Mammary epithelial cell (primary cell): ENCODE measurements at regions of chr1 and their contacts with region 1.

Region 1: DNA sequence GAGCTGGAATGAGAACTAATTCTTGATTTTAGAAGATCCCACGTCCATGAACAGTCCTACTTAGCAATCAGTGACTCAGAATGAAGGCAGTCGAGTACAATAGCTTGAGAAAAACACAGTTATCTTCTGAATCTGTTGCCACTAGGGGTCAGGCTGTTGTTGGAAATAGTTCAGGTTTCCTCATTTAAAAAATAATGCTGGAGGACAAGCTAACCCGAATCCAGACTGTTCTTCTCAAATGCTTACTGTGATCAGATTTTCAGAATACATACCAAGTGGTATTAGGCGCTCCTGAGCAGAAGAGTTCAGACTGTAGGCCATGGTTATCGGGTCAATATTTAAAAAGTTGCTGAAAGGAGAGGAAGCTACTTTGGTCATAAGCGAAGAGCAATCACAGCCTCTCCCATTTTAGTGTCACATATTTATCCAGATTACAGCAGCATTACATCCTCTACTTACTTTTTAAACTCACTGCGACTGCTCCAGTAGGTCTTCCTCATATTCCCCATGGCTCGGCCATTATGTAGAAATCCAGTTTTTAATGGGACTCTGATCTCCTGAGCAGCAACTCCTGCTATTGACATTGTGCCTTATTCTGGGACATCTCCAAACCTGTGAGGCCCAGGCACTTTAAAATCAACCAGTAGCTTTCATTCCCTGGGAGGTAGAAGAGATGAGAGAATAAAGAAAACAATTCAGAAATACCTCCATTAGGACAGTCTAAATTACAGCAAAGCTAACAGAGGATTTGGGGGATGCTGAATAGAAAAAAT is 10.9 kb downstream of the ERRFI1 start:
- DNase-seq: peak; percentile 78
- H3K4me3 ChIP-seq: no peak overlapping the region
- H3K27ac ChIP-seq: peak overlapping the region; percentile 30
- H3K4me1 ChIP-seq: peaks cover 58% of the 10 kb centered on the region
- H3K27me3 ChIP-seq: no peaks in the 10 kb centered on the region
- CTCF ChIP-seq: peak; percentile 60 to 67

Region 2: GRCh38 chr1:7975212-7975865 is 39.9 kb before region 1 on chr1:
- CTCF ChIA-PET with region 1: no interaction called
- dilution Hi-C with region 1: no loop called
- in situ Hi-C with region 1: loop called in 1 of 2 experiments (anchors 5 kb)
- intact Hi-C with region 1: no loop called
- DNase-seq: peak; percentile 75
- H3K4me3 ChIP-seq: no peak overlapping the region
- H3K27ac ChIP-seq: no peak overlapping the region
- H3K4me1 ChIP-seq: no peaks in the 10 kb centered on the region
- H3K27me3 ChIP-seq: no peaks in the 10 kb centered on the region
- CTCF ChIP-seq: peak; percentile 96 to 98

Region 3: GRCh38 chr1:7983086-7983778 is 32.0 kb before region 1 on chr1:
- CTCF ChIA-PET with region 1: no interaction called
- dilution Hi-C with region 1: no loop called
- in situ Hi-C with region 1: loop called in 1 of 2 experiments (anchors 5 kb)
- intact Hi-C with region 1: loop called (anchors 1 kb)
- DNase-seq: no peak
- H3K4me3 ChIP-seq: no peak overlapping the region
- H3K27ac ChIP-seq: no peak overlapping the region
- H3K4me1 ChIP-seq: peaks cover 3% of the 10 kb centered on the region
- H3K27me3 ChIP-seq: no peaks in the 10 kb centered on the region
- CTCF ChIP-seq: no peak

Region 4: GRCh38 chr1:8004803-8005554 is 10.2 kb before region 1 on chr1:
- CTCF ChIA-PET with region 1: interaction called, 9 read pairs
- dilution Hi-C with region 1: no loop called
- in situ Hi-C with region 1: no loop called
- intact Hi-C with region 1: loop called (anchors 1 kb)
- DNase-seq: peak; percentile 99
- H3K4me3 ChIP-seq: no peak overlapping the region
- H3K27ac ChIP-seq: peak overlapping the region; percentile 91
- H3K4me1 ChIP-seq: peaks cover 39% of the 10 kb centered on the region
- H3K27me3 ChIP-seq: no peaks in the 10 kb centered on the region
- CTCF ChIP-seq: no peak